Activated CD8-positive, alpha-beta memory T cell treated with anti-CD3 and anti-CD28 coated beads, Interleukin-2, amount 10 ng/mL, durations not matched to agents 7 days and 5 days (primary cell): ENCODE measurements at regions of chr5 and their contacts with region 1.

Region 1: DNA sequence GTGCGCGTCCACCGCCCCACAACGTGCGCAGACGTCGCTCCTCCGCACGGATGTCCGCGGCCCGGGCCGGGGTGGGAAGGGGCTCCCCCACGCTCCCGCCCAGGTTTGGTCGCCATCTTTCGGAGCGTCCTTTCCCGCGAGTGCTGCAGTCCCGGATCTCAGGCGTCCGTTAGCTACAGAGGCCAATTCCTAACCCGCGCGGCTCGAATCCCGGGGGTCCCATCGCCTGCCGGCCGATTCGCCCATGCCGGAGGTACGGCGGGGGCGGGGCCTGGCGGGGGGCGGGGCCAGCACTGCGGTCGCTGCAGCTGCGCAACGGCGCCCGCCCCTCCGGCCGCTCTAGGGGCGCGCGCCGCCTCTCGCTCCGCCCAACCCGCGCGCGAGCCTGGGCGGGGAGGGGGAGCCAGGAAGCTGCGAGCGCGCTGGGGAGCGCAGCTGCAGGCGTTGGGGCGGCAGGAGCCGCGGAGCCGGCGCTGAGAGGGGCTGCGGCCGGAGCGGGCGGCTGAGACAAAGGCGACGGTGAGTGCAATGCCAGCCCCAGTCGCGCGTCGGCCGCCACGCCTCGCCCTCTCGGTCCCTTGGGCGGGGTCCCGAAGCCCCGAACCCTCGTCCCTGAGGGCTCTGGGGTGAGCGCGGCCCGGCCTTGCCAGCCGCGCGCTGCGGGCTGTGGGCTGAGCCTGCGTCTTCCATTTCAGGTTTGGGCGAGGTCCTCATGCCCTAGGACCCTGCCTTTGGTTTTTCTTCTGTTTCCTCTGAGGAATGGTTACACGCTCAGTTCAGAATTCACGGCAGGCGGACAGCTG is at the start of gene CDC42SE2:
- DNase-seq: peak; percentile 89
- ATAC-seq: peak; percentile 87
- H3K4me3 Mint-ChIP-seq: peak within 1 kb of the TSS; percentile 83
- H3K27ac Mint-ChIP-seq: peak within 1 kb of the TSS; percentile 89
- H3K4me1 Mint-ChIP-seq: peaks cover 46% of the 10 kb centered on the region
- H3K27me3 Mint-ChIP-seq: no peaks in the 10 kb centered on the region
- total RNA-seq, gene CDC42SE2: 118 to 149 TPM

Region 2: GRCh38 chr5:131064669-131065371 is 199.0 kb before region 1 on chr5:
- CTCF ChIA-PET with region 1: no interaction called
- DNase-seq: peak; percentile 66
- ATAC-seq: peak; percentile 79
- H3K4me3 Mint-ChIP-seq: no peak overlapping the region
- H3K27ac Mint-ChIP-seq: peak overlapping the region; percentile 87
- H3K4me1 Mint-ChIP-seq: peaks cover 53% of the 10 kb centered on the region
- H3K27me3 Mint-ChIP-seq: no peaks in the 10 kb centered on the region

Region 3: GRCh38 chr5:131252824-131253171 is 11.1 kb before region 1 on chr5:
- CTCF ChIA-PET with region 1: interaction called, 94 read pairs
- DNase-seq: peak; percentile 94
- ATAC-seq: peak; percentile 75
- H3K4me3 Mint-ChIP-seq: peak overlapping the region; percentile 82
- H3K27ac Mint-ChIP-seq: peak overlapping the region; percentile 94
- H3K4me1 Mint-ChIP-seq: peaks cover 53% of the 10 kb centered on the region
- H3K27me3 Mint-ChIP-seq: no peaks in the 10 kb centered on the region

Region 4: GRCh38 chr5:131281133-131281867 is 17.5 kb after region 1 on chr5:
- CTCF ChIA-PET with region 1: interaction called, 35 read pairs
- DNase-seq: no peak
- ATAC-seq: peak; percentile 75
- H3K4me3 Mint-ChIP-seq: peak overlapping the region; percentile 77
- H3K27ac Mint-ChIP-seq: peak overlapping the region; percentile 92
- H3K4me1 Mint-ChIP-seq: peaks cover 85% of the 10 kb centered on the region
- H3K27me3 Mint-ChIP-seq: no peaks in the 10 kb centered on the region

Region 5: GRCh38 chr5:131302506-131302905 is 38.7 kb after region 1 on chr5:
- CTCF ChIA-PET with region 1: no interaction called
- DNase-seq: no peak
- ATAC-seq: no peak
- H3K4me3 Mint-ChIP-seq: no peak overlapping the region
- H3K27ac Mint-ChIP-seq: peak overlapping the region; percentile 70
- H3K4me1 Mint-ChIP-seq: peaks cover 60% of the 10 kb centered on the region
- H3K27me3 Mint-ChIP-seq: no peaks in the 10 kb centered on the region

Region 6: DNA sequence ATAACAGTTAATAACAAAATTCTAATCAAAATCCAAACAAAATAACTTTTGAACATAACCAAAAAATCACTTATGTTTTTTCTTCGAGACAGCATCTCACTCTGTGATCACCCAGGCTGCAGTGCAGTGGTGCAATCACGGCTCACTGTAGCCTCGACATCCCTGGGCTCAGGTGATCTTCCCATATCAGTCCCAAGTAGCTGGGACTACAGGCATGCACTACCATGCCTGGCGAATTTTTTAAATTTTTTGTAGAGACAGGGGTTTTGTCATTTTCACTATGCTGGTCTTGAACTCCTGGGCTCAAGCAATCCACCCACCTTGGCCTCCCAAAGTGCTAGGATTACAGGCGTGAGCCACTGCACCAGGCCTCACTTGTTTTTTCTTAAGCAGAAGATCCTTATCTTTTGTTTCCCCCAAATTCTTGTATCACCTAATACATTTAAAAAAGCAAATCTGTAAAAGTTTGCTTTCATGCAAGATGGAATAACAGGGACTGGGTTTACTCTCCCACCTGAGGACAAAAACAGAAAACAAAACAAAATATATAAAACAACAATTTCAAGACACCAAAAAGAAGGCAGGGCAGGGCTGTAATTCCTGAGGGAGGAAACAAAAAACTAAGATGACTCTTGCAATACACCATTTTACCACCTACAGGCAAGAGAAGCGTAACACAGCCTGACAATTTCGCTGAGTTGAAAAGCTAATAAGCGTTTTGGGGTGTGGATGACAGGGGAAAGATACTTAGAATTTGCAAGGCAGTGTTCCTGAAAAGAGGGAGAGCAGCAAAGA is 299.8 kb after region 1 on chr5:
- CTCF ChIA-PET with region 1: no interaction called
- DNase-seq: no peak
- ATAC-seq: no peak
- H3K4me3 Mint-ChIP-seq: no peak overlapping the region
- H3K27ac Mint-ChIP-seq: no peak overlapping the region
- H3K4me1 Mint-ChIP-seq: peaks cover 7% of the 10 kb centered on the region
- H3K27me3 Mint-ChIP-seq: no peaks in the 10 kb centered on the region